H1 (cell line): ENCODE measurements at regions of chr15 and their contacts with region 1.

Region 1: DNA sequence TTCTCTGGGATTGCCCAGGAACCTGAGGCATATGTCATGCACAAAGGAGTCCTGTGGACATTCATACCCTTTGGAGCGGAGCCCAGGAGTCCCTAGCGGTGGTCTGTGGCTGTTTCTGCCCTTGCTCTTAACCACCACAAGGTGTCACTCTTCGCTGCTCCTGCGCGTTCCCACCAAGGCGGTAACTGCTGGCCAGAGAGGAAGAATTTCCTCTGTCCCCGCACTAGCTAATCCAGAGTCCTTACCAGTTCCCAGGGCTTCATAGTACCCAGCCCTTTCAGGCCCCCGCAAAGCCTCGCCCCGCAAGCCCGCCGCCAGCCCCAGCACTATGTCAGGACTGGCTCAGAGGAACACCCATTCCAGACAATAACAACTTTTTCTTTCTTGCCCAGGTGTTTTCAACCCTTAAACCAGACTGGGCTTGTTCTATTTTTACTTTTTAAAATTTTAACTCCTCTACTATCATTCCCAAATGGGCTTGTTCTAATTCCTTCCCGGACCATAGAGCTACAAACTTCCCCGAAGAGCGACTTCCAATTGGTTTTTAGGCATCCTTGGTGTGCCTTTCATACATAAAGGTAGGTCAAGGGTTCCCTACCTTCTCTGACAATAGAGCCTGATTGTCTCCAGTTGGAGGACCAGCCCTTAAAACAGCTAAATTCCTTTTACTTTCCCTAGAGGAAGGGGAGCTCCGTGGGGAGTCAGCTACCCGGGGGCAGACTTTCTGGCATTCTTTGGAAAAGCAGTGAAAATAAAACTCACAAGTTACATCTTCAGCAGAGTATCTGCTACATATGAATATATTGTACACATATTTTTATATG is 31.8 kb upstream of the ZNF774 start:
- DNase-seq: peak; percentile 78 to 79
- H3K4me3 ChIP-seq: peak overlapping the region in 3 of 4 experiments; percentile 1 to 55 (median 20); a peak in 4 of 8 replicates
- H3K27ac ChIP-seq: no peak overlapping the region
- H3K4me1 ChIP-seq: peaks cover 0 to 3% (median 1%) of the 10 kb centered on the region in 4 experiments; a peak in 3 of 7 replicates
- H3K27me3 ChIP-seq: no peaks in the 10 kb centered on the region
- CTCF ChIP-seq: peak; percentile 95 to 100 (median 99)
- EP300 ChIP-seq: peak in 1 of 2 experiments; percentile 56; a peak in 1 of 3 replicates
- POLR2A ChIP-seq: no peak
- RAD21 ChIP-seq: peak; percentile 99 to 100

Region 2: DNA sequence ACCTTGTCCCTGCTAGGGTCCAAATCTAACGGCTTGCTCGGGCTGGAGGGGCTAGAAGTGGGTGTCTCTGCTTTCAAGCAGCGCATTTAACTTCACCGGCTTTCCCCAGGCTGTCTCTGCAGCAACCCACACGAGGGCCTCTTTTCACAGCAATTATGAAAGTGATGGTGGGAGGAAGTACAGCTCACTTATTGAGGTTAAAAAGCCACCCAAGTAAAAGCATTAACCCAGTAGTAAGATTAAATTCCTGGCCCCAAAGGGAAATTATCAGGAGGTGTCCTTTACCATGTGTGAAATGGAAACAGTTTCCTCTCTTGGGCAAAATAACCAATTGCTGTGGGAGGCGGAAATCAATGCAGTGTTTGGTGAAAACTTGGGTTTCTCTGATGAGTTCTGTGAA is 13.7 kb before region 1 on chr15:
- CTCF ChIA-PET with region 1: interaction called, 36 read pairs
- POLR2A ChIA-PET with region 1: interaction called, 4 read pairs
- DNase-seq: no peak
- H3K4me3 ChIP-seq: no peak overlapping the region
- H3K27ac ChIP-seq: no peak overlapping the region
- H3K4me1 ChIP-seq: peaks cover 0 to under 1% (median 0%) of the 10 kb centered on the region in 4 experiments; a peak in 1 of 7 replicates
- H3K27me3 ChIP-seq: no peaks in the 10 kb centered on the region
- CTCF ChIP-seq: no peak
- EP300 ChIP-seq: no peak
- POLR2A ChIP-seq: no peak
- RAD21 ChIP-seq: no peak

Region 3: GRCh38 chr15:90362936-90363212 is 42.6 kb after region 1 on chr15:
- CTCF ChIA-PET with region 1: interaction called, 19 read pairs
- POLR2A ChIA-PET with region 1: interaction called, 3 read pairs
- DNase-seq: no peak
- H3K4me3 ChIP-seq: no peak overlapping the region
- H3K27ac ChIP-seq: no peak overlapping the region
- H3K4me1 ChIP-seq: no peaks in the 10 kb centered on the region
- H3K27me3 ChIP-seq: 0 out of 7 replicates have a peak, but pooled peaks cover 0 to 3% (median 0%) of the 10 kb centered on the region in 4 experiments
- CTCF ChIP-seq: no peak
- EP300 ChIP-seq: no peak
- POLR2A ChIP-seq: no peak
- RAD21 ChIP-seq: no peak

Region 4: GRCh38 chr15:90471769-90472168 is 151.5 kb after region 1 on chr15:
- CTCF ChIA-PET with region 1: interaction called, 21 read pairs
- POLR2A ChIA-PET with region 1: no interaction called
- DNase-seq: no peak
- H3K4me3 ChIP-seq: no peak overlapping the region
- H3K27ac ChIP-seq: no peak overlapping the region
- H3K4me1 ChIP-seq: no peaks in the 10 kb centered on the region
- H3K27me3 ChIP-seq: no peaks in the 10 kb centered on the region
- CTCF ChIP-seq: no peak
- EP300 ChIP-seq: no peak
- POLR2A ChIP-seq: no peak
- RAD21 ChIP-seq: no peak

Region 5: GRCh38 chr15:90512981-90513380 is 192.7 kb after region 1 on chr15:
- CTCF ChIA-PET with region 1: interaction called, 16 read pairs
- POLR2A ChIA-PET with region 1: no interaction called
- DNase-seq: no peak
- H3K4me3 ChIP-seq: no peak overlapping the region
- H3K27ac ChIP-seq: no peak overlapping the region
- H3K4me1 ChIP-seq: no peaks in the 10 kb centered on the region
- H3K27me3 ChIP-seq: no peaks in the 10 kb centered on the region
- CTCF ChIP-seq: no peak
- EP300 ChIP-seq: no peak
- POLR2A ChIP-seq: no peak
- RAD21 ChIP-seq: no peak